PC-9 (cell line): ENCODE measurements at regions of chr6 and their contacts with region 1.

Region 1: GRCh38 chr6:10451828-10452509 is 37.1 kb upstream of the TFAP2A start:
- DNase-seq: peak; percentile 94 to 97
- H3K4me3 ChIP-seq: peak overlapping the region; percentile 4; the same call in 1 of the 2 replicates
- H3K27ac ChIP-seq: peak overlapping the region; percentile 96
- H3K4me1 ChIP-seq: peaks cover 32% of the 10 kb centered on the region
- H3K27me3 ChIP-seq: no peaks in the 10 kb centered on the region
- CTCF ChIP-seq: no peak

Region 2: DNA sequence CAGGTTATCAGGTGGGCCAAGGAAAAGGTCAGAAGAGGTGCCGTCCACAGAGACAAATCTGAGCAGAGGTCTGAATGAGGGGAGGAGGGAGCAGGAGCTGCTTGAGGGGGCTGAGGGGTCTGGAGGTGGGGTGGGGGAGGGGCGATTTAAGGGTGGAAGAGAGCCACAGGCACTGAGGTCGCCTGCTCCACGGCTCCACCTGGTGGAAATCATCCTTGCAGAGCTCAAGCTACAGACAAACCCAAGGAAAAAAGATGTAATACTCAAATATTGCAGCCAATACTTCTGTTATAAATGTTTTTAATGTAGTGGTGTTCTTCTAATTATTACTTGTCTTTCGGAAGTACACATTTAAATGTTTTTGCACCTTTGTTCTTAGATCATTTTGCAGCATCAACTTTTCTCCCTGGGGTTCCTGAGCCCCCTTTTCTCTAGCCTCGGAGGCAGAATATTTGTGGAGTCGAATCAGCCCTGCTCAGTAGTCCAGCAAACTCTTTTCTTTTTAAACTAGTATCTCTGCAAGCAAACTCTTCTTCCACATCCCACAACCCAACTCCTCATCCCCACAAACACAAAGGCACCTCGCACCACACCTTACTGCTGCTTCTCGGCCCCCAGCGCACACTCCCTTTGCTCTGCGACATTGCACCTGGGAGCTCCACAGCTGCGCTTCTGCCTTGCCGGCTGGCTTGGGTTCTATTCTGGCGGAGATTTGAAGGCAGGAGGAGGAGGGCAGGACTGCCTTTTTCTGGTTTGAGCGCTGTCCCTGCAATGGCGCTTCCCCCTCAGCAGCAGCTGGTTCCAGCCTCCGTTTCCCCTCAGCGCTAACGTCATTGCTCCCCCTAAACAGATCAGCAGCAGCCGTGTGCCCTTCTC is 13.9 kb after region 1 on chr6:
- CTCF ChIA-PET with region 1: no interaction called
- POLR2A ChIA-PET with region 1: no interaction called
- intact Hi-C with region 1: loop called (anchors 1 kb)
- DNase-seq: peak in 1 of 2 experiments; percentile 62
- H3K4me3 ChIP-seq: no peak overlapping the region
- H3K27ac ChIP-seq: no peak overlapping the region
- H3K4me1 ChIP-seq: peaks cover 19% of the 10 kb centered on the region
- H3K27me3 ChIP-seq: no peaks in the 10 kb centered on the region
- CTCF ChIP-seq: peak; percentile 61